Dendritic cell treated with granulocyte-macrophage colony-stimulating factor and Interleukin-4, amounts not matched to agents 40 ng/mL and 50 ng/mL, for 4 days (primary cell): ENCODE measurements at regions of chr2 and their contacts with region 1.

Region 1: GRCh38 chr2:152861349-152861942 is 143.0 kb downstream of the ARL6IP6 start:
- H3K4me3 Mint-ChIP-seq: no peak overlapping the region
- H3K27ac Mint-ChIP-seq: no peak overlapping the region
- H3K4me1 Mint-ChIP-seq: no peaks in the 10 kb centered on the region
- H3K27me3 Mint-ChIP-seq: no peaks in the 10 kb centered on the region

Region 2: DNA sequence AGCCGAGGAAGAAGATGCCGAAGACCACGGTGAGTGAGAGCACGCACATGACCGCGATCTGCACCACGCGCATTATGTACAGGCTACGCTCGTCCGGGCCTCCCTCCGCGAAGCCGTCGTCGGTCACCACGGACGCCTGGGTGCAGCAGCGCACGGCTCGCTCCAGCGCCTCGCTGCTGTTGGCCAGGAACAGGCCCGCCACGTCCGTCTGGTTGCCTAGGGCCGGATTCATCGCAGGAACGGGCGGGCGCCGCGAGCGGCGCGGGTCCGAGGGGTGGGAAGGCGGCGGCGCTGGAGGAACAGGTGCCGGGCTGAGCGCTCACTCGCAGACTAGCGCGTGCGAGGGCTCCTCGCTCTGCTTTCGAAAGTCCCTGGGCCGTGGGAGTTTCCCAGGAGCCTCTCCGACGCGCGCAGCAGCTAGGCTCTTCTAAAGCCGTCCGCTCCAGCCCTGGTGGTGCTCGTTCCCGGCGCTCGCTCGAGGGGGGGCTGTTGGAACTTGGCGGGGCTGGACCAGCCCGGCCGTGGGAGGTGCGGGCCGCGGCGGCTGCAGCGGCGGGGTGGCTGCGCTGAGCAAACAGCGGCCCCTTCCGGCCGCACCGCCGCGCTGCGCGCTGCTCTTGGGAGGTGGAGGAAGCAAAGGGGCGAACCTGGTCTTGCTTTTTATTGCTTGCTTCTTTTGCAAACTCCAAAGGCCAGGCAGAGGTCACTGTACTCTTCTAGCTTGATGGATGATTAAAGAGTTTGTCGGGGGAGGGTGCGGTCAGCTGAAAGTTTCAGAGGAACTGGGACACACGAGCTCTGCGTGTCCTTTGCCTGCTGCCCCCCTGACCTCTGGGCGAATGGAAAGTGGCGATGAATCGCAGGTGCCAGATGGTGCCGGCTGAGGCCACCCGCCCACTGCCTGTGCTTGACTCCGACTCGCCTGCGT is 617.2 kb after region 1 on chr2 and contains the start of gene RPRM:
- intact Hi-C with region 1: loop called (anchors 5 kb)
- H3K4me3 Mint-ChIP-seq: peak within 1 kb of the TSS; percentile 78
- H3K27ac Mint-ChIP-seq: no peak within 1 kb of the TSS
- H3K4me1 Mint-ChIP-seq: peaks cover 17% of the 10 kb centered on the region
- H3K27me3 Mint-ChIP-seq: peaks cover 58% of the 10 kb centered on the region

Region 3: DNA sequence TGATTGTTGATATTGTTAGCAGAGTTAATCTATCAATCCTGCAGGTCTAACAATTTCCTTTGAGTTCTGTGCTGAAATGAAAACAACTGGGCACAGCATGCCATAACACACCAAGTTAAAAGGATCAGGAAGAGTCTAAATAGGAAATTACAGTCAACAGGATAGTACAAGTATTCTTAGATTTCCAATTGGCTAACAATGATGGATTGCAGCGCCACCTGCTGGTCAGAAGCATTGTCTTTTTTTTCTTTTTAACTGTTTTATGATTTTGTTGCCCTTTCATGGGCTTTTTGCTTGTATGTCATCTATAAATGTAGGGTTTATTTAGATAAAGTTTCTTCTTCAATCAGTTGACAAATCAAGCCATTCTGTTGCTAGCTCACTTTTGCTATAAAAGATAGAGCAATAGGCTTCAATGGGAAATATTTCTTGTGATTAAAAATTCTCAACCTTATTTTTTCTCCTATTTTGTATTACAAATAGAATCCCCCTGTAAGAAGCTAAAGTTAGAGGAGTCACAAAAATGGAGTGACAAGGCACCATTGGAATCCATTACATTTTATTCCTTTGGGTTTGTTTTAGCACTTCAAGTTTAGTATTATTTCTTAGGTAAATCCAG is 657.9 kb after region 1 on chr2:
- intact Hi-C with region 1: loop called (anchors 5 kb)
- H3K4me3 Mint-ChIP-seq: no peak overlapping the region
- H3K27ac Mint-ChIP-seq: no peak overlapping the region
- H3K4me1 Mint-ChIP-seq: no peaks in the 10 kb centered on the region
- H3K27me3 Mint-ChIP-seq: no peaks in the 10 kb centered on the region